ENCODE measurements at regions of chr1 and their contacts with region 1.

Region 1: DNA sequence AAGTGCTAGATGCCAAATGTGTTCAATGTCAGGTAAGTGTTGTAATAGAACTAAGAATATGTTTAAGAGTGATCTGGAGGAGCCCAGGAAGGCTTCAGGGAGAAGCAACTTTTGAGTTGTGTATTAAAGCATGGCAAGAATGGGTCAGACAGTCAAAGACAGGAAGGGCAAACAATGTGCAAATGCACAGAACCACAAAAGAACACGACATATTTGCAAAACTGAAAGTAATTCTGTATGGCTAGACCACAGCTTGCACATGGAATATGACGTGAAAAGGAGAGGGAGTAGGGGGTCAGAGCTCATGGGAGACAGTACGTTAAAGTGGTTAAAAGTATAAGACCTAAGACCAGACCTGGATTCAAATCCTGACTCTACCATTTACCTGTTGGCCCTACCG is 7.1 kb upstream of the SORT1 start:
- DNase-seq: no peak
- H3K4me3 ChIP-seq: no peak overlapping the region
- H3K27ac ChIP-seq: no peak overlapping the region
- H3K4me1 ChIP-seq: peaks cover 0 to 6% (median 0%) of the 10 kb centered on the region in 4 donors
- H3K27me3 ChIP-seq: no peaks in the 10 kb centered on the region
- CTCF ChIP-seq: no peak
- EP300 ChIP-seq: no peak
- POLR2A ChIP-seq: no peak

Region 2: GRCh38 chr1:109099938-109100773 is 304.7 kb before region 1 on chr1:
- intact Hi-C with region 1: loop called (anchors 10 kb)
- DNase-seq: peak; percentile 99
- H3K4me3 ChIP-seq: peak overlapping the region; percentile 84 to 97 (median 89)
- H3K27ac ChIP-seq: peak overlapping the region; percentile 95 to 99 (median 97)
- H3K4me1 ChIP-seq: peaks cover 14 to 38% (median 25%) of the 10 kb centered on the region in 4 donors
- H3K27me3 ChIP-seq: no peaks in the 10 kb centered on the region
- CTCF ChIP-seq: peak; percentile 88 to 95 (median 90)
- EP300 ChIP-seq: no peak
- POLR2A ChIP-seq: peak; percentile 95

Region 3: DNA sequence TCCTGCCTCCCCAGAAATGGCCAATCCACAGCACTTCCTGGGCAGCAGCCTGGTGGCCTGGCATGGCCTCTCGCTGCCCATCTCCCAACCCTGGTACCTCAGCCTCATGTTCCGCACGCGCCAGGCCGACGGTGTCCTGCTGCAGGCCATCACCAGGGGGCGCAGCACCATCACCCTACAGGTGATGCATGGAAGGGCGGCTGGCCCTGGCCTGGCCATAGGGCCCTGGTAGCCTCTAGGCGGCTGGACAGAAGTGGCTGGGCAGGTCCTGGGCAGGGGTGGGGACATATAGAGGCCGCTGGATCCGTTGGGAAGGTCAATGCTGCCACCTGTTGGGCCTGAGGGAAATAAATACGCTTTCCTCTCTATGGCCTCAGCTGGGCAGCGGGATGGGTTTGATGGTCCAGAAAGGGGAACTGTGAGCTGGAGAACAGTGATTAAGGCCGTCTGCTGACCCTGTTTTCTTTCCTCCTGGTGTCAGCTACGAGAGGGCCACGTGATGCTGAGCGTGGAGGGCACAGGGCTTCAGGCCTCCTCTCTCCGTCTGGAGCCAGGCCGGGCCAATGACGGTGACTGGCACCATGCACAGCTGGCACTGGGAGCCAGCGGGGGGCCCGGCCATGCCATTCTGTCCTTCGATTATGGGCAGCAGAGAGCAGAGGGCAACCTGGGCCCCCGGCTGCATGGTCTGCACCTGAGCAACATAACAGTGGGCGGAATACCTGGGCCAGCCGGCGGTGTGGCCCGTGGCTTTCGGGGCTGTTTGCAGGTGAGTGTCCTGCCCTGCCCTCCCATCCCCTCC is 141.0 kb before region 1 on chr1:
- intact Hi-C with region 1: loop called (anchors 5 kb)
- DNase-seq: no peak
- H3K4me3 ChIP-seq: no peak overlapping the region
- H3K27ac ChIP-seq: peak overlapping the region in 3 of 4 donors; percentile 26 to 53 (median 40)
- H3K4me1 ChIP-seq: peaks cover 4 to 22% (median 17%) of the 10 kb centered on the region in 4 donors
- H3K27me3 ChIP-seq: no peaks in the 10 kb centered on the region
- CTCF ChIP-seq: peak in 2 of 3 experiments; percentile 92 to 95
- EP300 ChIP-seq: no peak
- POLR2A ChIP-seq: no peak

Region 4: GRCh38 chr1:109350655-109351054 is 54.2 kb before region 1 on chr1:
- intact Hi-C with region 1: loop called (anchors 5 kb)
- DNase-seq: no peak
- H3K4me3 ChIP-seq: no peak overlapping the region
- H3K27ac ChIP-seq: no peak overlapping the region
- H3K4me1 ChIP-seq: no peaks in the 10 kb centered on the region
- H3K27me3 ChIP-seq: no peaks in the 10 kb centered on the region
- CTCF ChIP-seq: no peak
- EP300 ChIP-seq: no peak
- POLR2A ChIP-seq: no peak

Region 5: DNA sequence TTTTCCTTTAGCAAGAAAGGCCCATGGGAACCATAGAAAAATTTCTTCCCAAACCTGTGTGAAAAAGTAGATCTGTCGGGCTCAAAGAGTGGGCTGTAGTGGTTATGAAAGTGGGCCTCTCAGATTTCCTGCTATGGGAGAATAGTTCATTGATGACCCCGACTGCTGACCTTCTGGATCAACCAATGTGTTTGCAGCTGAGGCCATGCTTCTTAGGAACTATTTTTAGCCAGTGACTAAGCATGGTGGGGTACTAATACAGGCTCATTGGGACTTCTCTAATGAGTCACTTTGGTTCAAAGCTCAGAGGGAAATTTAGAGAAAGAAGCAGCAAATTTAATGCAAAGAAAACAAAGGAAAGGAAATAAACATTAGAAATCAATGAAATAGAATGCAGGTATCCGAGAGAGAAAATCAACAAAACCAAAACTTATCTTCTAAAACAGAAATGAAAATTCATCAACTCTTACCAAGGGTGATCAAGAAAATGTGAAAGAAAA is 34.0 kb after region 1 on chr1:
- intact Hi-C with region 1: no loop called
- DNase-seq: no peak
- H3K4me3 ChIP-seq: no peak overlapping the region
- H3K27ac ChIP-seq: no peak overlapping the region
- H3K4me1 ChIP-seq: peaks cover 0 to 4% (median 0%) of the 10 kb centered on the region in 4 donors
- H3K27me3 ChIP-seq: peaks cover 0 to 16% (median 3%) of the 10 kb centered on the region in 4 donors
- CTCF ChIP-seq: no peak
- EP300 ChIP-seq: no peak
- POLR2A ChIP-seq: no peak

Region 6: GRCh38 chr1:109947582-109948286 is 542.9 kb after region 1 on chr1:
- intact Hi-C with region 1: no loop called
- DNase-seq: no peak
- H3K4me3 ChIP-seq: no peak overlapping the region
- H3K27ac ChIP-seq: no peak overlapping the region
- H3K4me1 ChIP-seq: peaks cover 0 to 6% (median 5%) of the 10 kb centered on the region in 4 donors
- H3K27me3 ChIP-seq: no peaks in the 10 kb centered on the region
- CTCF ChIP-seq: no peak
- EP300 ChIP-seq: no peak
- POLR2A ChIP-seq: no peak

Measured in esophagus muscularis mucosa (tissue), 4 donors.